A673 (cell line): ENCODE measurements at regions of chr12 and their contacts with region 1.

Region 1: GRCh38 chr12:31865023-31865422 is 94.2 kb upstream of the RESF1 start:
- DNase-seq: no peak
- H3K4me3 ChIP-seq: no peak overlapping the region
- H3K27ac ChIP-seq: no peak overlapping the region
- H3K4me1 ChIP-seq: no peaks in the 10 kb centered on the region
- H3K27me3 ChIP-seq: no peaks in the 10 kb centered on the region
- CTCF ChIP-seq: no peak

Region 2: GRCh38 chr12:31951008-31951407 is 86.0 kb after region 1 on chr12:
- CTCF ChIA-PET with region 1: no interaction called
- POLR2A ChIA-PET with region 1: interaction called, 13 read pairs
- intact Hi-C with region 1: no loop called
- DNase-seq: no peak
- H3K4me3 ChIP-seq: no peak overlapping the region
- H3K27ac ChIP-seq: no peak overlapping the region
- H3K4me1 ChIP-seq: no peaks in the 10 kb centered on the region
- H3K27me3 ChIP-seq: no peaks in the 10 kb centered on the region
- CTCF ChIP-seq: no peak

Region 3: DNA sequence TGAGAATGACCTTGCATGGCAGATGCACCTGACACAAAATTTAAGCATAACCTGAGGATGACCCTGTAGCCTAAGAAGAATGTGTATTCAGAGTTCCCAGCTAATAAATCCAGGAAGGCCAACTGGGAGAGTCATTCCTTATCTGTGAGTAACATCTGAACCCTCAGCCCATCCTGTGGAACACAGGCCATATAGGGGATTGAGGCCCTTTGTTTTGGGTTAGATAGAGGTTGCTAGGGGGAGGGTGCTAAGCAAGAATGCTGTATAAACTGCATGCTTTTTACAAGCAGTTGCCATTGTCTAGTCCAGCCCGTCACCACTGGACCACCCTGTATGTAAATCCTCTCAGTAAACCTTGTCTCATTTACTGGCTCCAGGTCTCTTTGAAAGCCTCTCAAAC is 318.6 kb after region 1 on chr12:
- CTCF ChIA-PET with region 1: no interaction called
- POLR2A ChIA-PET with region 1: no interaction called
- intact Hi-C with region 1: no loop called
- DNase-seq: no peak
- H3K4me3 ChIP-seq: no peak overlapping the region
- H3K27ac ChIP-seq: no peak overlapping the region
- H3K4me1 ChIP-seq: peaks cover 20% of the 10 kb centered on the region
- H3K27me3 ChIP-seq: no peaks in the 10 kb centered on the region
- CTCF ChIP-seq: no peak